IMR-90 (cell line): ENCODE measurements at regions of chr16 and their contacts with region 1.

Region 1: DNA sequence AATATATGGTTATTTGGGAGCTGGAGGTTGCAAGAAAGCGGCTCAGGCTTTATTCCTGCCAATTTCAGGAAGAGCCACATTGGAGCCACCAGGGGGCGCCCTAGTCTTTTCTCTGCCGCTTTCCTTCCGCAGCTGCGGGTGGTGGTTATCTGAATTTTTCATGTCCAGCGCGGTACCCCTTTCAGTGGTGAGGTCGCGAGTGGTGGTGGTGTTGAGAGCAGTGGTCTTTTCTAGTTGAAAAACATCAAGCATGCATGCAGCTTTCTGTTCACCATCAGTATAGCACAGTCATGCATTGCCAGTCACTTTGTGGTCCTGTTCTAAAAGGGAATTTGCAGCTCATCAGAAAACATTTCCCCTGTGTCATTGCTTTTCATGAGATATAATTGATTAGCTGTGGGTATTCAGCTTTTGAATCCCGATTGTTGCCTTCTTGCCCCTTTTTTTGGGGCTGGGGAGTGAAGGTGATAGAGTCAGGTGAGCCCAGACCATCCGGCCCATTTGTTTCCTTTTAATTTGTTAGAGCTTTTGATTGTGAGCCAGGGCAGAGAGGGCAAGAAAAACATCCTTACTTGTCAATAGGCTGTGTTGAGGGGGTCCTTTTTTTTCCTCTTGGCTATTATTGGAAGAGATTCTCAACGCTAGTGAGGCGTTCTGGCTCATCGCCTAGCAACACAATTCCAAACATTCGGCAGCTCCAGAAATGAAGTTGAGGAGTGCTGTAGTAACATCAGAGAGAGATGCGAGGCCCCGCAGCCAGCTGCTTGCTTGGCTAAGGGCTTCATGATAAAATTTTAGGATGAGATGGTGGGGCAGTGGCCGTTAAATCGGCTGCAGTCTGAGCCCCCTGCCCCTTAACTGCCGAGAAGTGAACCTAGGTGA is 119.0 kb downstream of the SNX29 start:
- DNase-seq: peak; percentile 62
- ATAC-seq: peak; percentile 28
- H3K4me3 ChIP-seq: no peak overlapping the region
- H3K27ac ChIP-seq: no peak overlapping the region
- H3K4me1 ChIP-seq: peaks cover 29% of the 10 kb centered on the region
- H3K27me3 ChIP-seq: no peaks in the 10 kb centered on the region
- CTCF ChIP-seq: peak; percentile 86
- POLR2A ChIP-seq: no peak
- RAD21 ChIP-seq: peak; percentile 86

Region 2: DNA sequence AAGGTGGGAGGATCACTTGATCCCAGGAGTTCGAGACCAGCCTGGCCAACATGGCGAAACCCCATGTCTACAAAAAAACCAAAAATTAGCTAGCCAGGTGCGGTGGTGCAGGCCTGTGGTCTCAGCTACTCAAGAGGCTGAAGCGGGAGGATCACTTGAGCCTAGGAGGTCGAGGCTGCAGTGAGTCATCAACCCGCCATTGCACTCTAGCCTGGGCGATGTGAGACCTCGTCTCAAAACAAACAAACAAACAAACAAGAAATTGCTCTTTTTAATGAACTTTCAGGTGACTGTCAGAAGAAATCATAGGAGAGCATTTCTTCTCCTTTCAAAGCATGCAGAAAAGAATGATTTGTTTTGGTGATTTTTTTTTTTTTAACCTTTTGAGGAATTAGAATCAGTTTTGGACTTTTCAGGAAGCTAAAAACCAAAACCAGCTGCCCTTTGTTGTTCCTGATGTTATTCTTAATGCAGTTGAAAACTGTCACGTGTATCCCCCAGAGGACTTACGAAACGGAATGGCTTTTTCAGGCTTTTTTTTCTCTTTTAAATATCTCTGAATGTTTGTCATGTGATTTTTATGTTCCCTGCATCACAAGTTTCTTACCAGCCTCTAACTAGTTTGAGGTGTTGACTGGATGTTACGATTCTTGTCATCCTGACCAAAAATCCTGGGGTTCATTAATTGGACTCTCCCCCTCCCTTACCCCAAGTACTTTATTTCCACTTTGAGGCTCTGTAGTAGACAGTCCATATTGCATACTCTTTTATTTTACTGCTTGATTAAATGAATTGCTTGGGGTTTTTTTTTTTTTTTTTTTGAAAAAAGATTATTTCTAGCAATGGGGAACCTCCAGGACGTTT is 84.9 kb before region 1 on chr16:
- CTCF ChIA-PET with region 1: no interaction called
- POLR2A ChIA-PET with region 1: no interaction called
- dilution Hi-C with region 1: no loop called
- in situ Hi-C with region 1: no loop called
- intact Hi-C with region 1: no loop called
- DNase-seq: no peak
- ATAC-seq: no peak
- H3K4me3 ChIP-seq: no peak overlapping the region
- H3K27ac ChIP-seq: no peak overlapping the region
- H3K4me1 ChIP-seq: no peaks in the 10 kb centered on the region; the same call in 1 of the 2 replicates
- H3K27me3 ChIP-seq: no peaks in the 10 kb centered on the region
- CTCF ChIP-seq: no peak
- POLR2A ChIP-seq: no peak
- RAD21 ChIP-seq: no peak

Region 3: DNA sequence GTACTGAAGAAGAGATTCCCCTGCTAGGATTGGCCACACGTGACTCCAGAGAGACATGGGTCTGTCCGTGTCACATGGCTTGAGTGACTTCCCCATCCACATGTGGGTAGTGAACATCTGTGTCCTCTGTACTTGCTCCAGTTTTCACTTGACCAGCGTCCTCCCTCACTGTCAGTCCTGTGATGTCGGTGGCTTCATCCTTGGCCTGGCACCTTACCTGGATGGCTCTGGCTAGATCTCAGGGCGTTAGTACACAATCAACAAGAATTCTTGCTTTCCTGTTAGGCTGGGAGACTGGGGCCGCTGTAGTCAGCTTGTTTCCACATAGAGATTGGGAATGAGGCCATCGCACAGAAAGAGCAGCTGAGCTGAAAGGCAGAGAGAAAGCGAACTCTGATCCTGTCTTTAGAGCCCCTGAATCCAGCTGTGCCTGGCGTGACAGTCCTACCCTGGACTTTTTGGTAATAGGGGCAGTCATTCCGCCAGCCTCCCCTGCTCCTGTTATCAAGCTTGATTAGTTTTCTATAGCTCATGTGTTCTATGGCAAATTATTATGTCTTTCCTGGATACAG is 108.3 kb after region 1 on chr16:
- CTCF ChIA-PET with region 1: interaction called, 4 read pairs
- POLR2A ChIA-PET with region 1: no interaction called
- dilution Hi-C with region 1: no loop called
- in situ Hi-C with region 1: loop called (anchors 10 kb)
- intact Hi-C with region 1: no loop called
- DNase-seq: no peak
- ATAC-seq: no peak
- H3K4me3 ChIP-seq: no peak overlapping the region
- H3K27ac ChIP-seq: no peak overlapping the region
- H3K4me1 ChIP-seq: peaks cover 2% of the 10 kb centered on the region; the same call in 1 of the 2 replicates
- H3K27me3 ChIP-seq: no peaks in the 10 kb centered on the region
- CTCF ChIP-seq: no peak
- POLR2A ChIP-seq: no peak
- RAD21 ChIP-seq: no peak

Region 4: DNA sequence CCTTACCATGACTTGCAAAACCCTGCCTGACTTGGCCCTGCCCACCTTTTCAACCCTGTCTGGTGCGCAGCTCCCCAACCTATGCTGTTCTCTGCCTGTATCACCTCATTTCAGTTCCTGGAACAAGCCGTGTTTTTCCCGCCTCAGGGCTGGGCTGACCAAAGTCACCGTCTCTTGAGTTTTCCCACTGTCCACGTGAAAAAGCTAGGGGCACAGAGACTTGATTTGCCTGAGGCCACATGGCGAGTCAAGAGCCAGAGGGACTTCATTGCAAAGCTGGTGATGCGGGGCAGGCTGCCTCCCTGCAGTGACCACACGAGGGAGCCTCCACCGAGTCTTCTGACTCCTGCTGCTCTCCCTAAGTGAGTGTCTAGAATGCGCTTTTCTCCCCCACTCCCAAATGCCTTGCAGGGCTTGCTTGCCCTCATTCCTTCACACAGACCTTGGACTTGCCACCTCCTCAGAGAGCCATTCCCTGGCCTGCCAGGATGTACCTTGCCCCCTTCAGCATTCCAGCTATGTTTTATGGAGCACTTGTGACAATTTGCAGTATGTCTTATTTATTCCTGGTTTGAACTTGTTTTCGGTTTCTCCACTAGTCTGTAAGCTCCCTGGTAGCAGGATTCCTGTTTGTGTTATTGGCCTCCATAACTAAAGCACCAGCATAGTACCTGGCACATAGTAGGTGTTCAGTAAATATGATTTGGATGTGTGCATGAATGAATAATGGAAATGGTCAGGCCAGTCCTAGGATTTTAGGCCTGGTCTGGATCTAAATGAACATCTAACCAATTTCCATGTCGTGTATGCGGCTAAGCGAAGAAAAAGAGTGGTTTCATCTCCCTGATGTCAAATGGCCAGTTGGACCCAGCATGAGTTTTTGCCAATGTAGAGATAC is 133.3 kb after region 1 on chr16:
- CTCF ChIA-PET with region 1: interaction called, 27 read pairs
- POLR2A ChIA-PET with region 1: no interaction called
- dilution Hi-C with region 1: no loop called
- in situ Hi-C with region 1: no loop called
- intact Hi-C with region 1: loop called (anchors 1 kb)
- DNase-seq: peak; percentile 71
- ATAC-seq: peak; percentile 65
- H3K4me3 ChIP-seq: no peak overlapping the region
- H3K27ac ChIP-seq: no peak overlapping the region
- H3K4me1 ChIP-seq: peaks cover 37% of the 10 kb centered on the region
- H3K27me3 ChIP-seq: no peaks in the 10 kb centered on the region
- CTCF ChIP-seq: peak; percentile 76
- POLR2A ChIP-seq: no peak
- RAD21 ChIP-seq: peak; percentile 71

Region 5: GRCh38 chr16:12271006-12271405 is 175.5 kb after region 1 on chr16:
- CTCF ChIA-PET with region 1: interaction called, 6 read pairs
- POLR2A ChIA-PET with region 1: no interaction called
- dilution Hi-C with region 1: no loop called
- in situ Hi-C with region 1: loop called (anchors 10 kb)
- intact Hi-C with region 1: loop called (anchors 2 kb)
- DNase-seq: peak; percentile 32
- ATAC-seq: peak; percentile 70
- H3K4me3 ChIP-seq: no peak overlapping the region
- H3K27ac ChIP-seq: no peak overlapping the region
- H3K4me1 ChIP-seq: no peaks in the 10 kb centered on the region
- H3K27me3 ChIP-seq: no peaks in the 10 kb centered on the region
- CTCF ChIP-seq: peak; percentile 48
- POLR2A ChIP-seq: no peak
- RAD21 ChIP-seq: peak; percentile 55

Region 6: GRCh38 chr16:12392585-12393091 is 297.1 kb after region 1 on chr16:
- CTCF ChIA-PET with region 1: no interaction called
- POLR2A ChIA-PET with region 1: no interaction called
- dilution Hi-C with region 1: no loop called
- in situ Hi-C with region 1: no loop called
- intact Hi-C with region 1: loop called (anchors 10 kb)
- DNase-seq: no peak
- ATAC-seq: no peak
- H3K4me3 ChIP-seq: no peak overlapping the region
- H3K27ac ChIP-seq: no peak overlapping the region
- H3K4me1 ChIP-seq: peaks cover 9% of the 10 kb centered on the region
- H3K27me3 ChIP-seq: no peaks in the 10 kb centered on the region
- CTCF ChIP-seq: 0 out of 2 replicates have a peak, but pooled peaks have one; percentile 7
- POLR2A ChIP-seq: no peak
- RAD21 ChIP-seq: no peak

Region 7: DNA sequence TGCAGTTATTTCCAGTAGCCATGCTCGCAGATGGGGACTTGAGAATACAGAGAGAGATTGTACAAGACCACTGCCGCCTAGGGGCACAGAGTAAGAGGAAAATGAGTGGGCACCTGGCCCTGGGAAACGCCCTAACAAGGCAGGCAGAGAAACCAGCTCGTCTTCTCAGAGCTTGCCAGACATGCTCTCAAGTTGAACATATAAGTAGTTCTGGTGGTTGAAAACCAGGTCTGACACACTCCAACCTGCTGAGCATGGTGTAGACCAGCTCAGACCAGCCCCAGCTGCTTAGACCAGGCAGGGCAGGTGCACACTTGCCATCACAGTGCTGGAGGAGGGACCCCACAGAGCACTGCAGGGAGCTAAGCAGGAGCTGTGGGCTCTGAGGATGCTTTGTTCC is 457.7 kb after region 1 on chr16:
- CTCF ChIA-PET with region 1: no interaction called
- POLR2A ChIA-PET with region 1: no interaction called
- dilution Hi-C with region 1: no loop called
- in situ Hi-C with region 1: no loop called
- intact Hi-C with region 1: loop called (anchors 10 kb)
- DNase-seq: no peak
- ATAC-seq: no peak
- H3K4me3 ChIP-seq: no peak overlapping the region
- H3K27ac ChIP-seq: no peak overlapping the region
- H3K4me1 ChIP-seq: no peaks in the 10 kb centered on the region
- H3K27me3 ChIP-seq: no peaks in the 10 kb centered on the region
- CTCF ChIP-seq: no peak
- POLR2A ChIP-seq: no peak
- RAD21 ChIP-seq: no peak